Activated B cell treated with CpG ODN at 0.5 μM for 24 hours (primary cell): ENCODE measurements at regions of chr7 and their contacts with region 1.

Region 1: DNA sequence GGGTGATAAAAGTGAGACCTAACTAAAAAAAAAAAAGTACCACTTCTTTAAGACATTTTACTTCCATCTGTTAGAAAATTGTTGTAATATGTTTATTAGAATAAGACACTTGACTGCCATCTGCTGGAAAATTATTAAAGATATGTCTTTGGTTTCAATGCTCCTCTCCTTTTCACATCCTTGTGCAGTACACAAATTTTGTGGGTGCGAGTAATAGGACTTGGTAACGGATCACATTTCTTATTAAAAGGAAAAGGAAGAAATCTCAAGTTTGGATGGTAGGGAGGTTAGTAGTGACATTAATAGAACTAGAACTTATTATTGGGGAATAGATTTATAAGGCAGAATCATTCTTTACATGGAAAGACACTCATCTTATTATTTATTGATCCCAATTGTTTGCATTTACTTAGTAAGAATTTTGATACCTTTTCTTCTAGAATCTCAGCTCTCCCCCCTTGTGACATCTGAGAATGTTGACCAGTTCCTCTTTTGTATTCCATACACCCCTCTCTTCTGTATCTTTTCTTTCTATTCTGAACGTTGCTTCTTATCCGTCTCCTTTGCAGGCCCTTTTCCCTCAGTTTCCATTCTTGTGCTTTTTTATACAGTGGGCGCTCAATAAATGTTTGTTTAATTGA is 43.1 kb upstream of the RPA3 start:
- DNase-seq: no peak
- ATAC-seq: peak; percentile 60
- H3K4me3 Mint-ChIP-seq: peak overlapping the region; percentile 88
- H3K27ac Mint-ChIP-seq: peak overlapping the region; percentile 87
- H3K4me1 Mint-ChIP-seq: peaks cover 34% of the 10 kb centered on the region
- H3K27me3 Mint-ChIP-seq: no peaks in the 10 kb centered on the region
- CTCF ChIP-seq: no peak

Region 2: GRCh38 chr7:7595451-7595850 is 166.0 kb before region 1 on chr7:
- CTCF ChIA-PET with region 1: no interaction called
- POLR2A ChIA-PET with region 1: no interaction called
- intact Hi-C with region 1: loop called (anchors 1 kb)
- DNase-seq: no peak
- ATAC-seq: peak; percentile 56
- H3K4me3 Mint-ChIP-seq: no peak overlapping the region
- H3K27ac Mint-ChIP-seq: no peak overlapping the region
- H3K4me1 Mint-ChIP-seq: no peaks in the 10 kb centered on the region
- H3K27me3 Mint-ChIP-seq: no peaks in the 10 kb centered on the region
- CTCF ChIP-seq: no peak

Region 3: DNA sequence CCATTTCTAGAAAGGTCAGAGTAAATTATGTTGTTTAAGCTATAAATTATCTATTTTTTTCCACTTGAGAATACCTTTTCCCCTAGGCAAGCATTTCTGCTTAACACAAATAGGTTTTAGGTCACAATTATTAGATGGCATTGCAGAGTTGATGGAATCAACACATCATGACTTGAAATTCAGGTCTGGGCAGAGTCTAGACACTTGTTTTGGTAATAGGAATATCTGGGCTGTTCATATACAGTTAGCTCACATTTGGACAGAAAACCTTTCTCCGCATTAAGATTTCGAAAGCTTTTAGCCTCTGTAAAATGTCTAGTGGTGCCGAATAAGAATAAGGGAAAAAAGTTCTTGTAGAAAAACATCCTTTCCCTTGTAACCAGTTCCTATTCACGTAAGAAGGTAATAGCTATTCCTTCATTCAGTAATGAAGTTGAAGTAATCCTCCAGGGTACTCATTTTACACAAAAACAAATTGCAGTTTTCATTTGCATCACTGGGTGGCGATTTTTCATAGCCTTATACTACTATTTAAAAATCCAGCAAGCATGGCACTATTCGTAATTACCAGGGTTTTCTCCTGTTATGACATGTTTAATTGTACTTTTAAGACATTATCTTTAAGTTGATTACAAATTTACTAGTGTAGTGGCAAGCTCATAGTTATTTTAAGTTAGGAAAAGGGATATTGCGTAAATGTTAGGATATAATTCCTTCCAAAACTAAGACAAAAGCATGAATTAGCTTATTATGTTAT is 80.1 kb before region 1 on chr7:
- CTCF ChIA-PET with region 1: interaction called, 25 read pairs
- POLR2A ChIA-PET with region 1: interaction called, 6 read pairs
- intact Hi-C with region 1: loop called (anchors 1 kb)
- DNase-seq: no peak
- ATAC-seq: peak; percentile 84
- H3K4me3 Mint-ChIP-seq: no peak overlapping the region
- H3K27ac Mint-ChIP-seq: peak overlapping the region; percentile 50
- H3K4me1 Mint-ChIP-seq: peaks cover 27% of the 10 kb centered on the region
- H3K27me3 Mint-ChIP-seq: no peaks in the 10 kb centered on the region
- CTCF ChIP-seq: no peak

Region 4: GRCh38 chr7:7772397-7772821 is 10.9 kb after region 1 on chr7:
- CTCF ChIA-PET with region 1: interaction called, 5 read pairs
- POLR2A ChIA-PET with region 1: interaction called, 5 read pairs
- intact Hi-C with region 1: loop called (anchors 1 kb)
- DNase-seq: no peak
- ATAC-seq: peak; percentile 78
- H3K4me3 Mint-ChIP-seq: peak overlapping the region; percentile 84
- H3K27ac Mint-ChIP-seq: peak overlapping the region; percentile 93
- H3K4me1 Mint-ChIP-seq: peaks cover 46% of the 10 kb centered on the region
- H3K27me3 Mint-ChIP-seq: no peaks in the 10 kb centered on the region
- CTCF ChIP-seq: no peak

Region 5: DNA sequence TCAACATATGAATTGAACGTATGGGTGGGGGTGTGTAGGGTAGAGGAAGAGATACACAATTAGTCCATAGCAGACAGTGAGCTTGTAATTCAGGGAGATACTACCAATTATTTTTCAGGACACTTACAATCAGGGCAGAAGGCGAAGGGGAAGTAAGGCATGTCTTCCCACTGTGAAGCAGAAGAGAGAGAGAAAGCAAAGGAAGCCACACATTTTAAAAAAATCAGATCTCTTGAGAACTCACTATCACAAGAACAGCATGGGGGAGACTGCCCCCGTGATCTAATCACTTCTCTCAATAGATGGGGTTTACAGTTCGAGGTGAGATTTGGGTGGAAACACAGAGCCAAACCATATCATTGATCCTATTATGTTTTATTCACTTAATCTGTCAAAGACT is 73.3 kb after region 1 on chr7:
- CTCF ChIA-PET with region 1: no interaction called
- POLR2A ChIA-PET with region 1: no interaction called
- intact Hi-C with region 1: no loop called
- DNase-seq: no peak
- ATAC-seq: no peak
- H3K4me3 Mint-ChIP-seq: no peak overlapping the region
- H3K27ac Mint-ChIP-seq: no peak overlapping the region
- H3K4me1 Mint-ChIP-seq: peaks cover 17% of the 10 kb centered on the region
- H3K27me3 Mint-ChIP-seq: no peaks in the 10 kb centered on the region
- CTCF ChIP-seq: no peak

Region 6: GRCh38 chr7:7861211-7861633 is 99.8 kb after region 1 on chr7:
- CTCF ChIA-PET with region 1: no interaction called
- POLR2A ChIA-PET with region 1: no interaction called
- intact Hi-C with region 1: no loop called
- DNase-seq: no peak
- ATAC-seq: no peak
- H3K4me3 Mint-ChIP-seq: no peak overlapping the region
- H3K27ac Mint-ChIP-seq: no peak overlapping the region
- H3K4me1 Mint-ChIP-seq: peaks cover 25% of the 10 kb centered on the region
- H3K27me3 Mint-ChIP-seq: no peaks in the 10 kb centered on the region
- CTCF ChIP-seq: no peak

Region 7: DNA sequence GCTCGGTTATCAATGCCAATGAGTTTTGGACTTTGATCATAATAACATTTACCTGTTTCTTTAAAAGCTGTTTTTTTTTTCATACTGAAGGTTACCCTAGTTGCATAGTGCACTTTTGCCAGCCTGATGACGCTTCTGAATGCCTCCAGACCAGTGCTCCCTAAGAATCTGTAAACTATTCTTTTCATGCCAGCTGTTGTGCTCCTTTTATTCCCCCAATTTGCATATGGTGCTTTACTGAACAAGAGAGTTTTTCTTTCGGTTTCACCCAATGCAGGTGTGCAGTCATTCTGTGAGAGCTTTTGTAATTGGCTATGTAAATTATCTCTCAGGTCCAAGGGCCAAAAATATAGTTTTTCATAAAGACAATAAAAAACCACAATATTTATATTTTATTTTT is 159.0 kb after region 1 on chr7:
- CTCF ChIA-PET with region 1: interaction called, 3 read pairs
- POLR2A ChIA-PET with region 1: no interaction called
- intact Hi-C with region 1: loop called (anchors 2 kb)
- DNase-seq: no peak
- ATAC-seq: peak; percentile 92
- H3K4me3 Mint-ChIP-seq: peak overlapping the region; percentile 69
- H3K27ac Mint-ChIP-seq: peak overlapping the region; percentile 91
- H3K4me1 Mint-ChIP-seq: peaks cover 62% of the 10 kb centered on the region
- H3K27me3 Mint-ChIP-seq: no peaks in the 10 kb centered on the region
- CTCF ChIP-seq: no peak

Region 8: GRCh38 chr7:8190119-8190895 is 428.8 kb after region 1 on chr7:
- CTCF ChIA-PET with region 1: interaction called, 4 read pairs
- POLR2A ChIA-PET with region 1: interaction called, 3 read pairs
- intact Hi-C with region 1: loop called (anchors 1 kb)
- DNase-seq: no peak
- ATAC-seq: peak; percentile 87
- H3K4me3 Mint-ChIP-seq: no peak overlapping the region
- H3K27ac Mint-ChIP-seq: no peak overlapping the region
- H3K4me1 Mint-ChIP-seq: peaks cover 20% of the 10 kb centered on the region
- H3K27me3 Mint-ChIP-seq: no peaks in the 10 kb centered on the region
- CTCF ChIP-seq: no peak